Mammary epithelial cell (primary cell): ENCODE measurements at regions of chr5 and their contacts with region 1.

Region 1: GRCh38 chr5:31581498-31582099 is 49.5 kb downstream of the C5orf22 start:
- DNase-seq: peak; percentile 14
- H3K4me3 ChIP-seq: no peak overlapping the region
- H3K27ac ChIP-seq: no peak overlapping the region
- H3K4me1 ChIP-seq: no peaks in the 10 kb centered on the region
- H3K27me3 ChIP-seq: no peaks in the 10 kb centered on the region
- CTCF ChIP-seq: peak; percentile 24 to 51

Region 2: DNA sequence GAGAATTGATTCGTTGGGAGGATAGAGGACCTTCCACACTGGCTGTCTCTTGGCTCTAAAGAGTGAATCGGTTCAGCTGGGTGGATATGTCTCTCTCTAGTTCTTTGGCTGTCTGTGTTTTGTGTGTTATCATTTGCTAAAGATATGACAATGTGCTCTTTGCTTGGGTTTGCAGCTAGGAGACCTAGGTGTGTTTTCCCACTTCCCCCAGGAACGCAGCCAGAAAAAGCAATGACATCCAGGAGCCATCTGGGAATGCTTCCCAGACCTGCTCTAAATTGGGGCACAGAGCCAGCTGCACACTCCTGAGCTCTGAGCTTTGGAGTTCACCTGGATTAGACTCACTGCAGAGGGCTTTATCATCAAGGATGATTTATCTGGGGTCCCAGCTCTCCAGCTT is 44.6 kb after region 1 on chr5:
- CTCF ChIA-PET with region 1: no interaction called
- dilution Hi-C with region 1: no loop called
- in situ Hi-C with region 1: no loop called
- intact Hi-C with region 1: no loop called
- DNase-seq: no peak
- H3K4me3 ChIP-seq: no peak overlapping the region
- H3K27ac ChIP-seq: no peak overlapping the region
- H3K4me1 ChIP-seq: no peaks in the 10 kb centered on the region
- H3K27me3 ChIP-seq: no peaks in the 10 kb centered on the region
- CTCF ChIP-seq: no peak

Region 3: DNA sequence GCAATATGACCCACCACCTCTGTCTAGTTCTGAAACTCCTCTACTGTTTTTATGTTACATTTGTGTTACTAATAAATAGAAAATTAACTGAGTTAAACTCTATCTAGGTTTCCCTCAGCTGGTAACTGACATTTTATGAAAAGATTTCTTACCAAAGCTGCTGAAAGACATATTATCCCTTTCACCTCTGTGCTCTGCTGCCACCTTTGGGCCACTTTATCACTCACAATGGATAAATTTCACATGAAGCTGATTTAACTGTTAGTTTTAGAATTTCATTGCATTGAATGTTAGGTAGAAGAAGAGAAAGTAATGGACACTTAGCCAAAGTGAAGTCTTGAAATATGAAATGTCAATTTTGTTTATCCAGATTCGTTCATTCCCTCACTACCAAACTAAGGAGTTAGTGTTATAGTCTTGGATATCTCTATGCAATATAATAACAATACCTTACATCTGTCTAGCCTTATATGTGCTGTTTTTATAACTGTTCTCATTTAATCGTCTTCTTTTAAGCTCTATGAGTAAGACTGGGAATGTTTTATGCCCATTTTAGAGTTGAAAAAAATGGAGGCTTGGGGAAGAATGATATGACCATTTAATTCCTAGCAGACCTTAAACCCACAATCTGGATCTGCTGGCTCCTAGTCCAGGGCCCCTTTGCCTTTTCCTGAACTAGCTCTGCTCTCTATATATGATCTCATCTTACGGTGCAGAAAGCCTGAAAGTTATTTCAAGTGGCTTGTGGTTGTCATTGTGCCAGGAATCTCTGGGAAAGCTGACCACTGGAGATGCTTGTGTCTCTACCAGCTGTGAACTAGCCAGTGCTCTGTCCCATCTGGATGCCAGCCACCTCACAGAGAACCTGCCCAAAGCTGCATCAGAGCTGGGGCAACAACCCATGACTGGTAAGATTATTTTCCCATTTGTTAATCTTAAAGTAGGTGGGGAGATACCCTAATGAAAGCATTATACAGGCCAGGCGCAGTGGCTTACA is 495.4 kb after region 1 on chr5:
- CTCF ChIA-PET with region 1: no interaction called
- dilution Hi-C with region 1: no loop called
- in situ Hi-C with region 1: no loop called
- intact Hi-C with region 1: loop called (anchors 1 kb)
- DNase-seq: peak; percentile 39
- H3K4me3 ChIP-seq: no peak overlapping the region
- H3K27ac ChIP-seq: no peak overlapping the region
- H3K4me1 ChIP-seq: peaks cover under 1% of the 10 kb centered on the region
- H3K27me3 ChIP-seq: no peaks in the 10 kb centered on the region
- CTCF ChIP-seq: peak; percentile 73 to 79

Region 4: GRCh38 chr5:32092938-32093812 is 511.6 kb after region 1 on chr5:
- CTCF ChIA-PET with region 1: no interaction called
- dilution Hi-C with region 1: no loop called
- in situ Hi-C with region 1: loop called (anchors 10 kb)
- intact Hi-C with region 1: loop called (anchors 1 kb)
- DNase-seq: peak; percentile 66
- H3K4me3 ChIP-seq: no peak overlapping the region
- H3K27ac ChIP-seq: no peak overlapping the region
- H3K4me1 ChIP-seq: no peaks in the 10 kb centered on the region
- H3K27me3 ChIP-seq: no peaks in the 10 kb centered on the region
- CTCF ChIP-seq: peak; percentile 61 to 78